ENCODE measurements at regions of chr15 and their contacts with region 1.

Region 1: GRCh38 chr15:33086507-33087121 is 107.9 kb downstream of the FMN1 start:
- DNase-seq: no peak
- ATAC-seq: no peak

Region 2: DNA sequence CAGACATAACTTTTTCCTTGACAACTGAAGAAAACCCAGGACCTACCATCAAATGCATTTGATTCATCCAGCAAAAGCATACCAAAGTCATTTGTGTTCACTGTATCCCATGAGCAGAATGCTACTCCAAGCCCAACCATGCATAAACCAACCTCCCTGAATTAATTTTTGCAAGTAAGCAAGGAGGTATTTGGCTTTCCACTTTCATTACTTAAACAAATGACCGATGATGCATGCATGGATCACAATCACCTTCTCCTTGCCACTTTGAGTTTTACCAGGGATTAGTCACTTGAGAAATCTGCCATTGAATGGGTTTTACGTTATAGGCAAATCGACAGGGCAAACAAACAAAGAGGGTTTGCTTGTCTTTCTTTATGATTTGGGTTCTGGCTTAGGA is 106.9 kb before region 1 on chr15:
- intact Hi-C with region 1: no loop called
- DNase-seq: no peak
- ATAC-seq: no peak

Region 3: DNA sequence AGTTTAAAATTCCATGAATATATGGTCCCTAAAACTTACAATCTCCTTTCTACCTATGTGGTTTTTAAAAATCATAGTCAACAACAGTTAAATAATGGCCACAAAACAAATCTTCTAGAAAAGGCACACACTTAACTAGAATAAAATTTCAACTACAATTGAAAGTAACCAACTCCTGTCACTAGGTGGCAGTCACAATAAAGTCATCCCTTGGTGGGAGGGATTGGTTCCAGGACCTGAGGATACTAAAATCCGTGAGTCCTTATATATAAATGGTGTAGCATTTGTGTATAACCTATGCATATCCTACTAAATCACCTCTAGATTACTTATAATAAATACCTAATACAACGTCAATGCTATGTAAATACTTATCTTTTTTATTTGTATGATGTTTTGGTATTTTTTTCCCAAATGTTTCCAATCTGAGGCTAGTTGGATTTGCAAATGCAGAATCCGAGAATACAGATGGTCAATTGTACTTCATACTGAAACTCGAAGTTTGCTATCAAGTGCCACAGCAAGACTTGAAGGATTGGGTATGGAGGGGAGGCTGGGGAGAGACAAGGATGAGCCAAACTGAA is 64.7 kb before region 1 on chr15:
- intact Hi-C with region 1: no loop called
- DNase-seq: no peak
- ATAC-seq: peak; percentile 73

Region 4: GRCh38 chr15:33067941-33068481 is 18.6 kb before region 1 on chr15:
- intact Hi-C with region 1: no loop called
- DNase-seq: peak; percentile 79
- ATAC-seq: peak; percentile 83

Region 5: GRCh38 chr15:33132722-33133345 is 46.2 kb after region 1 on chr15:
- intact Hi-C with region 1: loop called (anchors 5 kb)
- DNase-seq: no peak
- ATAC-seq: peak; percentile 57

Region 6: GRCh38 chr15:33215941-33216872 is 129.6 kb after region 1 on chr15:
- intact Hi-C with region 1: loop called (anchors 10 kb)
- DNase-seq: no peak
- ATAC-seq: no peak

Region 7: DNA sequence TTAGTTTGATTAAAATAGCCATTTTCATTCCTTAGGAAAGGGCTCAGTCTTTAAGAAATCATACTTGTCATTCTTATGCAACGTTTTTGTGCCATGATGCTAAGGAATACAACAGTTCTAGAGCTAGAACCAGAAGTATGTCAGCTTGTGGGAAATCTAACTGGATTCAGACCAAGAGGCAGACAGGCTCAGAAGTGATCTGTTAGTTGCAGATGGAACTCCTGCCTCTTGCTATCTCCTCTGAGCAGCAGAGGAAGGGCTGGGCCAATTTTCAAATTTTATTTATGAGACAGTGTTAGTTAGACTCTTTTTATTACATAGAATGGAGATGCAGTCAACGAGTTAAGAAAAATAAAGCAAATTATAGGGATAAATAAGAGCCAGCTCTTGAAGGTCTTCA is 175.7 kb after region 1 on chr15:
- intact Hi-C with region 1: no loop called
- DNase-seq: no peak
- ATAC-seq: no peak